ENCODE measurements at regions of chr2 and their contacts with region 1.

Region 1: DNA sequence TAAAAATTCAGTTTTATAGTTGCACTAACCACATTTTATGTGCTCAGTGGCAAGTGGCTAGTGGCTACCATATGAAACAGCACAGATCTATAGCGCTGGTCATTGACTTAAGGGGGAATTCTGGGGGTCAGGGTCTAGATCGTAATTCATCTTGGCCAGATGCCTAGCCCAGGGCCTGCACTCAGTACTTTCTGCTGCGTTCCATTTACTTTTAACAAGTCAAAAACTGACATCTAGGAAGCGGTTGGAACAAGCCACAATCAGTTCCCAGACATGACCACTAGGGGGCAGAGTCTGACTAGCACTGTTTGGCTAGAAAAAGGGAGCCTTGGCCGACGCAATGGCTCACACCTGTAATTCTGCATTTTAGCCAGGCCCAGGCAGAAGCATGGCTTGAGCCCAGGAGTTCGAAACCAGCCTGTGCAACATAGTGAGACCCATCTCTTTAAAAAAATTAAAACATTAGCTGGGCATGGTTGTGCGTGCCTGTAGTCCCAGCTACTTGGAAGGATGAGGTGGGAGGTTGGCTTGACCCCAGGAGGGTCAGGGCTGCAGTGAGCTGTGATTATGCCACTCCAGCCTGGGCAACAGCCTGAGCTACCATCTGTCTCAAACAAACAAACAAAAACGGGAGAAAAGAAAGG is 9.0 kb upstream of the TMBIM1 start:
- DNase-seq: no peak
- H3K27ac ChIP-seq: no peak overlapping the region; the same call in 1 of the 2 replicates
- CTCF ChIP-seq: peak; percentile 93

Region 2: GRCh38 chr2:218216336-218216673 is 85.0 kb before region 1 on chr2:
- CTCF ChIA-PET with region 1: no interaction called
- POLR2A ChIA-PET with region 1: no interaction called
- DNase-seq: no peak
- H3K27ac ChIP-seq: peak overlapping the region; percentile 90
- CTCF ChIP-seq: no peak

Region 3: DNA sequence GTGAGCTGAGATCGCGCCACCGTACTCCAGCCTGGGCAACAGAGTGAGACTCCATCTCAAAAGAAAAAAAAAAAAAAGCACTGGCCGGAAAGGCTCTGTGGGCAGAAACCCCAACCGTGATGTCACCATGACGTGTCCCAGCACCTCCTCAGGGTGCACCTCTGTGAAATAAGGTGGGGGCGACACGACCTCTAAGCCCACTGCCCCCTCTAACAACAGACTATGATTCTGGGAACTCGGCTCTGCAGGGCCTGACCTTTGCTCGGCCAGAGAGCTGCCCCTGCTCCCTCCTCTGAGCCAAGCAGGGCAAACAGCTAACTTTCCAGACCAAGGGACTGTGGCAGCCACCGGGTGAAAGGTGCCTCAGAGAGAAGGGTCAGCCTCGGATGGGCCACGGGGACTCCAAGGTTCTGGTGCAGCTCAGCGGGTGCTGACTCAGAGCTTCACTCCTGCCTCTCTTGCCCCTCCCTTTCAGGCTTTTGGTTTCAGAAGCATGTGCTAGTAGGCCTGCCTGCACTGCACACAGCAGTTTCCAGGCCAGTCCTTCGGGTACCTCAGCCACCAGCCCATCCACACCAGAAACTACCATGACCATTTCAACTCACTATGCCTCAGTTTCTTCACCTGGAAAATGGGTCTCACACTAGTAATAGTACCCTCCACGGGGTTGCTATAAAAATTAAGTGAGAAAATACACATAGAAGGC is 17.0 kb before region 1 on chr2:
- CTCF ChIA-PET with region 1: interaction called, 5 read pairs
- POLR2A ChIA-PET with region 1: interaction called, 19 read pairs
- DNase-seq: peak; percentile 77
- H3K27ac ChIP-seq: peak overlapping the region; percentile 99
- CTCF ChIP-seq: no peak

Region 4: GRCh38 chr2:218357236-218358159 is 56.2 kb after region 1 on chr2:
- CTCF ChIA-PET with region 1: interaction called, 31 read pairs
- POLR2A ChIA-PET with region 1: no interaction called
- DNase-seq: no peak
- H3K27ac ChIP-seq: peak overlapping the region; percentile 13
- CTCF ChIP-seq: no peak